ENCODE measurements at regions of chr17 and their contacts with region 1.

Region 1: DNA sequence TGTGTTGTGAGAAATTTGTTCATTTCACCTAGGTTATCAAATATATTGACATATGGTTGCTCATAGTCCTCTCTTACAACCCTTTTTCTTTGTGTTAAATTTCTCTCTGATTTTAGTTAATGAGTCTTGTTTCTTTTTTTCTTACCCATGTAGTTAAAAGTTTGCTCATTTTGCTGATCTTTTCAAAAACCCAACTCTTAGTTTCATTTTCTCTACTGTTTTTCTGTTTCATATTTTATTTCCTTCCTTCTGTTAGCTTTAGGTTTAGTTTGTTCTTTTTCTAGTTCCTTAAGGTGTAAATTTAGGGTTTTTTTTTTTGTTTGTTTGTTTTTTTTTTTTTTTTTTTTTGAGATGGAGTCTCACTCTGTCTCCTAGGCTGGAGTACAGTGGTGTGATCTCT is 42.4 kb downstream of the CEP112 start:
- DNase-seq: no peak
- ATAC-seq: no peak
- H3K4me3 ChIP-seq: no peak overlapping the region
- H3K27ac ChIP-seq: no peak overlapping the region
- H3K4me1 ChIP-seq: no peaks in the 10 kb centered on the region
- H3K27me3 ChIP-seq: no peaks in the 10 kb centered on the region
- CTCF ChIP-seq: no peak

Region 2: GRCh38 chr17:64950871-64951270 is 1198.7 kb before region 1 on chr17:
- CTCF ChIA-PET with region 1: no interaction called
- POLR2A ChIA-PET with region 1: interaction called, 11 read pairs
- intact Hi-C with region 1: no loop called
- DNase-seq: no peak
- ATAC-seq: no peak
- H3K4me3 ChIP-seq: no peak overlapping the region
- H3K27ac ChIP-seq: no peak overlapping the region
- H3K4me1 ChIP-seq: no peaks in the 10 kb centered on the region
- H3K27me3 ChIP-seq: no peaks in the 10 kb centered on the region
- CTCF ChIP-seq: no peak

Region 3: GRCh38 chr17:66177048-66177447 is 27.5 kb after region 1 on chr17:
- CTCF ChIA-PET with region 1: no interaction called
- POLR2A ChIA-PET with region 1: no interaction called
- intact Hi-C with region 1: no loop called
- DNase-seq: peak; percentile 90
- ATAC-seq: peak; percentile 100
- H3K4me3 ChIP-seq: no peak overlapping the region
- H3K27ac ChIP-seq: no peak overlapping the region
- H3K4me1 ChIP-seq: peaks cover 16% of the 10 kb centered on the region
- H3K27me3 ChIP-seq: no peaks in the 10 kb centered on the region
- CTCF ChIP-seq: no peak

Measured in PC-3 (cell line).